Gastrocnemius medialis (tissue), 4 donors: ENCODE measurements at regions of chr2 and their contacts with region 1.

Region 1: DNA sequence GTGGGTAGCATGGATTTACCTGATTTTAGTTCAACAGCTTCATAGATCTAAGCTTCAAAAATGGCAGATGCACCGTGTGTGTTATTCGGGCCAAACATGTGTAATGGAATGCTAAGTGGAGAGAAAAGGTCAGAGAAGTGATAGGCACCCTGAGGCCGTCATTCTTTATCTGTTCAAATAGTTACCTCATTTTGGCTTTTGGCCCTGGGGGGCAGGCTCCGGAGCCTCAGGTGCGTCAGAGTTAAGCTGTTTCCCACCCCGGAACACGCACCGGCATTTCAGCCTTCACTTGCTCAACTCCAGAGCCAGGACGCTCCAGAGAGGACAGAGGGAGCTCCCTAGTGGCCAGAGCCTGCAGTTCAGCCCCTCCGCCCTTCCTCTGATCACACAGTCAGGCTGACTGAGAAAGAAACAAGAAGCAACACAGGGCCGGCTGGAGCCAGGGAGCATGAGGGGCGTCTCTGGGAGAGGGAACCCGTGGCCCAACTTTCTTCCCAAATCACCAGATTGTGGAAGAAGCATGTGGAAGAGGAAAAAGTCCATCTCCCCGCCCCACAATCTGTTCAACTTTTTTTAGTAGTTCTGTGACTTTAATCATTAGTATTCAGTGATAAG is 135.2 kb upstream of the EPC2 start:
- DNase-seq: peak; percentile 56 to 78
- ATAC-seq: peak; percentile 94 to 99
- H3K4me3 ChIP-seq: peak overlapping the region; percentile 41 to 49 (median 44)
- H3K27ac ChIP-seq: no peak overlapping the region
- H3K4me1 ChIP-seq: peaks cover 0 to 4% of the 10 kb centered on the region in 2 donors
- H3K27me3 ChIP-seq: no peaks in the 10 kb centered on the region
- CTCF ChIP-seq: peak; percentile 64 to 90 (median 78)
- POLR2A ChIP-seq: no peak

Region 2: DNA sequence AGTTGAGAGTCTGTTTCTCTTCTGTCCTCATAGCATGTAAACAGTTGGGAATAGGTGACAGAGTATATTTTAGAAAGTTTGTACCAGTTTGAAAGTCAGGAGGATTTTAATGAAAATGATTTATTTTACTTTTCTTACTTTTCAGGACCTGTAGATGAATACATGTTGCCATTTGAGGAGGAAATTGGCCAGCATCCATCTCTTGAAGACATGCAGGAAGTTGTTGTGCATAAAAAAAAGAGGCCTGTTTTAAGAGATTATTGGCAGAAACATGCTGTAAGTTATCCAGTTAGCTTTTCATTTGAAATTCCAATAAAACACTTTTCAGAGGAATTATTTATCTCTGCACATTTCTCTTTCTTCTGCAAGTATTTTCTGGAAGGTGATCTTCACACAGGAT is 583.5 kb before region 1 on chr2:
- in situ Hi-C with region 1: loop called in 2 of 4 experiments (anchors 10 kb)
- intact Hi-C with region 1: no loop called
- DNase-seq: no peak
- ATAC-seq: no peak
- H3K4me3 ChIP-seq: no peak overlapping the region
- H3K27ac ChIP-seq: no peak overlapping the region
- H3K4me1 ChIP-seq: peaks cover 0 to 15% of the 10 kb centered on the region in 2 donors
- H3K27me3 ChIP-seq: no peaks in the 10 kb centered on the region
- CTCF ChIP-seq: no peak
- POLR2A ChIP-seq: no peak

Region 3: DNA sequence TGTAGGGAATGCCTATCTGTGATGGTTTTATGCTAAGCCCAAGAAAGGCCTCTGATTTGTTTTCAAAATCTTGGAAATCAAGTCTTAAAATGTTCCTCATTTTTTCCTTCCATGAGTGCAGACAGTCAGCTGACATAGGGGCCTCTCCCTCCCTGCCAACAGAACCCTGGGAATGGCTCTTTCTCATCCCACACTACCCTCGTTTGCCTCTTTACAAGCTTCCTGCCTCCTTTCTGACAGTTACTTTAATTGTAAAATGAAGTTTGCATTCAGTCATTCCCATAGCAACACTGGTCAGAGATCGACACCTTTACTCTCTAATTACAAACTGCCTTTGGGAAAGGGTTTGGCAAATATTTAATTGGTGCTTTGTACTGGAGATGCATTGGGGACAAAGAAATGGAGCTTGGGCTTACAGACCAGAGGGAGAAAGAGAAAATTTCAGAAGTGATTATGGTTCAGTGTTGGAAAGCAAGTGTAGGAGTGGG is 391.0 kb after region 1 on chr2:
- in situ Hi-C with region 1: no loop called
- intact Hi-C with region 1: no loop called
- DNase-seq: no peak
- ATAC-seq: no peak
- H3K4me3 ChIP-seq: no peak overlapping the region
- H3K27ac ChIP-seq: no peak overlapping the region
- H3K4me1 ChIP-seq: no peaks in the 10 kb centered on the region
- H3K27me3 ChIP-seq: peaks cover 0 to 3% (median 0%) of the 10 kb centered on the region in 3 donors
- CTCF ChIP-seq: no peak
- POLR2A ChIP-seq: no peak